ENCODE measurements at regions of chr7 and their contacts with region 1.

Region 1: GRCh38 chr7:7761340-7761980 is 43.1 kb upstream of the RPA3 start:
- DNase-seq: peak; percentile 58
- ATAC-seq: peak; percentile 73
- H3K4me3 ChIP-seq: peak overlapping the region in 1 of 2 experiments; percentile 59; a peak in 2 of 4 replicates
- H3K27ac ChIP-seq: no peak overlapping the region
- H3K4me1 ChIP-seq: peaks cover 8% of the 10 kb centered on the region; the same call in 1 of the 2 replicates
- H3K27me3 ChIP-seq: no peaks in the 10 kb centered on the region
- CTCF ChIP-seq: peak; percentile 59; the same call in 1 of the 2 replicates

Region 2: GRCh38 chr7:7595451-7595850 is 166.0 kb before region 1 on chr7:
- CTCF ChIA-PET with region 1: no interaction called
- POLR2A ChIA-PET with region 1: no interaction called
- in situ Hi-C with region 1: no loop called
- intact Hi-C with region 1: loop called (anchors 10 kb)
- DNase-seq: peak; percentile 15
- ATAC-seq: 0 out of 2 replicates have a peak, but pooled peaks have one; percentile 60
- H3K4me3 ChIP-seq: no peak overlapping the region
- H3K27ac ChIP-seq: no peak overlapping the region
- H3K4me1 ChIP-seq: no peaks in the 10 kb centered on the region
- H3K27me3 ChIP-seq: no peaks in the 10 kb centered on the region
- CTCF ChIP-seq: no peak

Region 3: GRCh38 chr7:7681179-7681935 is 80.1 kb before region 1 on chr7:
- CTCF ChIA-PET with region 1: interaction called, 10 read pairs
- POLR2A ChIA-PET with region 1: no interaction called
- in situ Hi-C with region 1: no loop called
- intact Hi-C with region 1: loop called (anchors 5 kb)
- DNase-seq: peak; percentile 85
- ATAC-seq: peak; percentile 95
- H3K4me3 ChIP-seq: no peak overlapping the region
- H3K27ac ChIP-seq: peak overlapping the region; percentile 39; the same call in 1 of the 2 replicates
- H3K4me1 ChIP-seq: peaks cover 14% of the 10 kb centered on the region
- H3K27me3 ChIP-seq: no peaks in the 10 kb centered on the region
- CTCF ChIP-seq: peak; percentile 75; the same call in 1 of the 2 replicates

Region 4: DNA sequence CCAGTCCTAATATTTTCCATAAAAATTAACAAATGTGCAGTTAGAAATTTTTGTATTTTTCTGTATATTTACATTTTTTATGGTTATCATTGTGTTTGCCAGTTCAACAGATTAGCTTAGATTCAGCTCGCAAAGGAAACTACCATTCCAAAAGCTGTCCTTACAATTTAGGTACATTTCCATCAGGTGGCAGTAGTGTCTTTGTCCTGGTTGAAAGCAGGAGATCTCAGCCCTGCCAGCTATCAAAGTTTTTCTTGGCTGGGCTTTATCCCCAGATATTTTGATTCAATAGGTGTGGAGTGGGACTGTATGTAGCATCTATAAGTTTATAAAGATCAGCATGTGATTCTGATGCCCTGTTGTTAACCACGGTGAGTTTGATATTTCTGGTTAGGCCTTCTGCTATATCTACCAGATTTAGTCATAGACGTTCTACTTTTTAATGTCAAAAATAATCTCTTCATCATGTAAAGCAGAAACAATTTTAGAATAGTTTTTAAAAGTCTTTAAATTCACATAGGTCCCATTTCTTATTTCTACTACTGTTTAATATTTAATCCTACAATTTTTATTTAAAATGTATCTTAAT is 516.0 kb after region 1 on chr7:
- CTCF ChIA-PET with region 1: no interaction called
- POLR2A ChIA-PET with region 1: no interaction called
- in situ Hi-C with region 1: no loop called
- intact Hi-C with region 1: no loop called
- DNase-seq: peak; percentile 24
- ATAC-seq: peak; percentile 74
- H3K4me3 ChIP-seq: no peak overlapping the region
- H3K27ac ChIP-seq: no peak overlapping the region
- H3K4me1 ChIP-seq: no peaks in the 10 kb centered on the region
- H3K27me3 ChIP-seq: peaks cover 19% of the 10 kb centered on the region
- CTCF ChIP-seq: peak; percentile 71